Activated T-helper 1 cell treated with anti-CD3 and anti-CD28 coated beads, Interleukin-12 subunit alpha, Interleukin-12 subunit beta, Interleukin-2, Interleukin-4 antibody, amounts not matched to agents 30 ng/mL and 10 ng/mL and 1 ng/mL, durations not matched to agents 14 hours and 24 hours and 36 hours (primary cell): ENCODE measurements at regions of chr12 and their contacts with region 1.

Region 1: DNA sequence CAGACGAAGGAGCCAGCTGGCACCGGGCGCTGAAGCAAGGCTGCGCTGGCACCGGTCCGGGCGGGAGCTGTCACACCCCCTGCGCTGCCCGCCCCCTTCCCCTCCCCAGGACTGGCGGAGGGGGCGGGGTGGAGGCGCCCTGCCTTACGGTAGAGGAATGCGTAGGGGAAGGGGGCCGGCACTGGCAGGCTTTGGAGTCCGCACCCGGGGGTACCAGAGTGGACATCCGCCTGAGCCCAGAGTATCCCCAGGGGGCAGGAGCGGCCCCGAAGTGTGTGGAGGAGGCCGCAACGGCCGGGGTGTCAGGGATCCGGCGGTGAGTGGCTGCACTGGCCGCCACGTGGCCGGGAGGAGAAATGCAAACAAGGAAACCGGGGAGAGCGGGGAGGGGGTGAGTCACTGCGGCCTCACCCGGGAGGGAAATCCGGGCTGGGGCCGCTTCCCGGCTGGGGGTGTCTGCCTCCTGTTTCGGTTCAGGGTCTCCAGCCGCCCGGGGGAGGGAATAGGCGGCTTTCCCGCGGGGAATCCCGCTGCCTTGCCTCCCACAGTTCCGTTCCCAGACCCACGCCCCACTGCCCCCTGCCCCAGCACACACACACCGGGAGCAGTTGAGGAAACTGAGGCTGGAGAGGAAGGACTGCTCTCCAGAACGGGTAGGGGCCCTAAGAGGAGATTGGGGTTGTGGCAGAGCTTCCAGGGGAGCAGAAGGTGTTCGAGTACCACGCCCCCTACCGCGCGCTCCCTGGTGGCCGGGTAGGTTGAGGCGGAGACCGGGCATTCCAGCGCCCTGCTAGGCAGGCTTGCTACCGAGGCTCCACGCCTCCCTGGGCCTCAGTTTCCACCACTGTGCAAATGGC is at the start of gene RAPGEF3:
- DNase-seq: peak; percentile 58
- H3K4me3 Mint-ChIP-seq: peak within 1 kb of the TSS; percentile 75
- H3K27ac Mint-ChIP-seq: no peak within 1 kb of the TSS
- H3K4me1 Mint-ChIP-seq: peaks cover 56% of the 10 kb centered on the region
- H3K27me3 Mint-ChIP-seq: peaks cover 4% of the 10 kb centered on the region
- total RNA-seq, gene RAPGEF3: 4.7 and 6.5 TPM in 2 replicates

Region 2: GRCh38 chr12:47651368-47652254 is 107.5 kb before region 1 on chr12:
- intact Hi-C with region 1: loop called (anchors 5 kb)
- DNase-seq: peak; percentile 31
- H3K4me3 Mint-ChIP-seq: no peak overlapping the region
- H3K27ac Mint-ChIP-seq: no peak overlapping the region
- H3K4me1 Mint-ChIP-seq: peaks cover 10% of the 10 kb centered on the region
- H3K27me3 Mint-ChIP-seq: no peaks in the 10 kb centered on the region

Region 3: GRCh38 chr12:47773062-47773857 is 14.2 kb after region 1 on chr12 and contains the start of gene SLC48A1:
- intact Hi-C with region 1: loop called (anchors 2 kb)
- DNase-seq: peak; percentile 73
- H3K4me3 Mint-ChIP-seq: peak within 1 kb of the TSS; percentile 90
- H3K27ac Mint-ChIP-seq: peak within 1 kb of the TSS; percentile 85
- H3K4me1 Mint-ChIP-seq: peaks cover 45% of the 10 kb centered on the region
- H3K27me3 Mint-ChIP-seq: peaks cover 7% of the 10 kb centered on the region
- total RNA-seq, gene SLC48A1: 12.7 TPM in 2 replicates

Region 4: DNA sequence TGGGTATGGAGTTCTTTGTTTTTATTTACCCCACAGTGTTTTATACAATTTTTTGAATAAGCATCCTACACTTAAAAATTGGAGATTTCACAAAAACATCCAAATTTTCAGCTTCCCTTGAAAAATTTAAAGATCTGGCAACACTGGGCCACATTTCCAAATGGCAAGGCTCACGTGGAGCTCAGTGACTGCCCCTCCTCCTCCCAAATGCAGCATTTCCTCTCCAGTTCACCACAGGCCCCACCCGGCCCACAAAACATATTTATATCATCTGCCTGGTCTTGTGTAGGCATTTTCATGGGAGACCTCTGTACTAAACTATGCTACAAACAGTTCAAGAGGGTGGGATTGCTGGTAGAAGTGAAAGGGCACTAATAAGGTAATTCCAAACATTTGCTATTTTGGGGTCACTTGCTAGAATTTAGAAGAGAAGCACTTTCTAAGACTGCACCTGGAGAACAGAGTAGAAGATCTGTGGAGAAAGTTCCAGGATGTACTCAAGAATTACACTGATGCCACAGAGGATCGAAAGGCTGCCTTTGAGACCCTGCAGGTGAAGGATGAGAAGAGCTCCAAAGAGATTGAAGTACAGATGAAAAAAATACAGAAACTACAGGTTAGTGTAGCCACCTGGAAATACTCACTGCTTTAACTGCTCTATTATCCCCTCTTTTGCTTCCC is 1158.9 kb after region 1 on chr12:
- intact Hi-C with region 1: no loop called
- DNase-seq: peak; percentile 16
- H3K4me3 Mint-ChIP-seq: peak overlapping the region; percentile 79
- H3K27ac Mint-ChIP-seq: peak overlapping the region; percentile 62
- H3K4me1 Mint-ChIP-seq: peaks cover 36% of the 10 kb centered on the region
- H3K27me3 Mint-ChIP-seq: no peaks in the 10 kb centered on the region